ENCODE measurements at regions of chr20 and their contacts with region 1.

Region 1: GRCh38 chr20:35619196-35620095 is 3.8 kb downstream of the SPAG4 start:
- DNase-seq: peak; percentile 89 to 96
- ATAC-seq: peak; percentile 66 to 79
- H3K4me3 ChIP-seq: peak overlapping the region; percentile 61
- H3K27ac ChIP-seq: peak overlapping the region; percentile 80 to 90
- H3K4me1 ChIP-seq: peaks cover 18% of the 10 kb centered on the region
- CTCF ChIP-seq: peak; percentile 75
- EP300 ChIP-seq: no peak
- POLR2A ChIP-seq: peak; percentile 37; the same call in 1 of the 2 replicates
- RAD21 ChIP-seq: peak in 1 of 2 experiments; percentile 35; a peak in 3 of 5 replicates

Region 2: GRCh38 chr20:35363190-35363589 is 256.3 kb before region 1 on chr20:
- CTCF ChIA-PET with region 1: no interaction called
- POLR2A ChIA-PET with region 1: no interaction called
- DNase-seq: no peak
- ATAC-seq: no peak
- H3K4me3 ChIP-seq: no peak overlapping the region
- H3K27ac ChIP-seq: no peak overlapping the region
- H3K4me1 ChIP-seq: peaks cover 4% of the 10 kb centered on the region
- CTCF ChIP-seq: no peak
- EP300 ChIP-seq: no peak
- POLR2A ChIP-seq: no peak
- RAD21 ChIP-seq: no peak

Region 3: GRCh38 chr20:35463455-35464300 is 155.8 kb before region 1 on chr20:
- CTCF ChIA-PET with region 1: interaction called, 21 read pairs
- POLR2A ChIA-PET with region 1: no interaction called
- DNase-seq: peak; percentile 74
- ATAC-seq: peak; percentile 90 to 93
- H3K4me3 ChIP-seq: no peak overlapping the region
- H3K27ac ChIP-seq: 0 out of 6 replicates have a peak overlapping the region, but pooled peaks of 1 of the 2 experiments have one; percentile 6
- H3K4me1 ChIP-seq: peaks cover 21% of the 10 kb centered on the region
- CTCF ChIP-seq: peak; percentile 83
- EP300 ChIP-seq: no peak
- POLR2A ChIP-seq: no peak
- RAD21 ChIP-seq: peak; percentile 77 to 80

Region 4: DNA sequence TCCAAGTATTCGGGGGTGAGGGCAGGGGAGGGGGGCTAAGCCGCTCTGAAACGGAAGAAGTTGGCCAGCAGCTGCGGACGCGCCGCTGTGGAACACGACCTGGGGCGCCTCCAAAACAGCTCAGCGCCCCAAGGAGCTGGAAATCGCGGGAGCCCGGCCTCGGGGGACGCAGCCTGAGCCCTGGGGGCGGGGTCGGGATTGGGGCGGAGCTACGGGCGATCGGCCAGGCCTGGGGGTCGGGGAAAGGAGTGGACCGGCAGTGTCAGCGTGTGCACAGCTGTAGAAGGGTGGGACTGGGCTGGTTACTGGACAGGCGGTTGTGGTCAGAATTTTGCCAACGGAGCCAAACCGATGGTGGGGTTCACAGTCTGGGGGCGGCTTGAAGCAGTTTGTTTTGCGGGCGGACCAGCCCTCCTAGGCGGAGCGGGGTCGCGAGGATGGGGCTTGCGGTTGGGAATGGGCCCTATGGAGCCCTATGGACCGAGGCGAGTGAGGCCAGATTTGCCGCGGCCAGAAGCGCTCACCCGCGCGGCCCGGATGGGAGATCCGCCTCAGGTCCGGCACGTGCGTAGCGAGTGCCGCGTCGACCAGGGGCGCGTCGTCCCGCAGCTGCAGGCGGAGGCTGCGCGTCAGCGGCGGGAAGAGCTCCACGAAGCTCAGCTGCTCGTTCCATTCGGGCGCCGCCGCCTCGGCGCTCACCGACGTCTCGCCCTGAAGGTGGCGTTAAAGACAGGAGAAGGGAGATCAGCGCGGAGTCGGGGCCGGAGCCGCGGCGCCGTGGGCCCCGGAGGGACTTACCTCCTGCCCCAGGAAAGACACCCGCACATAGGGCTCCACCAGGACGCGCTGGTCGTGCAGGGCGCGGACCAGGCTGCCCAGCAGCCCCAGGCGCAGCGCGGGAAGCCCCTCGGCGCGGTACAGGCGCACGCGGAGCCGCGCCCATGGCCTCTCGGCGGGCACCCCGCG is 18.2 kb before region 1 on chr20:
- CTCF ChIA-PET with region 1: interaction called, 44 read pairs
- POLR2A ChIA-PET with region 1: interaction called, 8 read pairs
- DNase-seq: peak; percentile 76 to 79
- ATAC-seq: peak; percentile 86 to 89
- H3K4me3 ChIP-seq: peak overlapping the region; percentile 44
- H3K27ac ChIP-seq: peak overlapping the region; percentile 65 to 85; a peak in 5 of 6 replicates
- H3K4me1 ChIP-seq: peaks cover 10% of the 10 kb centered on the region; the same call in 2 of the 3 replicates
- CTCF ChIP-seq: peak; percentile 55
- EP300 ChIP-seq: no peak
- POLR2A ChIP-seq: no peak
- RAD21 ChIP-seq: peak; percentile 53 to 64; a peak in 4 of 5 replicates

Region 5: GRCh38 chr20:35641743-35642142 is 22.3 kb after region 1 on chr20:
- CTCF ChIA-PET with region 1: interaction called, 11 read pairs
- POLR2A ChIA-PET with region 1: no interaction called
- DNase-seq: no peak
- ATAC-seq: no peak
- H3K4me3 ChIP-seq: no peak overlapping the region
- H3K27ac ChIP-seq: no peak overlapping the region
- H3K4me1 ChIP-seq: no peaks in the 10 kb centered on the region
- CTCF ChIP-seq: no peak
- EP300 ChIP-seq: no peak
- POLR2A ChIP-seq: no peak
- RAD21 ChIP-seq: no peak

Region 6: DNA sequence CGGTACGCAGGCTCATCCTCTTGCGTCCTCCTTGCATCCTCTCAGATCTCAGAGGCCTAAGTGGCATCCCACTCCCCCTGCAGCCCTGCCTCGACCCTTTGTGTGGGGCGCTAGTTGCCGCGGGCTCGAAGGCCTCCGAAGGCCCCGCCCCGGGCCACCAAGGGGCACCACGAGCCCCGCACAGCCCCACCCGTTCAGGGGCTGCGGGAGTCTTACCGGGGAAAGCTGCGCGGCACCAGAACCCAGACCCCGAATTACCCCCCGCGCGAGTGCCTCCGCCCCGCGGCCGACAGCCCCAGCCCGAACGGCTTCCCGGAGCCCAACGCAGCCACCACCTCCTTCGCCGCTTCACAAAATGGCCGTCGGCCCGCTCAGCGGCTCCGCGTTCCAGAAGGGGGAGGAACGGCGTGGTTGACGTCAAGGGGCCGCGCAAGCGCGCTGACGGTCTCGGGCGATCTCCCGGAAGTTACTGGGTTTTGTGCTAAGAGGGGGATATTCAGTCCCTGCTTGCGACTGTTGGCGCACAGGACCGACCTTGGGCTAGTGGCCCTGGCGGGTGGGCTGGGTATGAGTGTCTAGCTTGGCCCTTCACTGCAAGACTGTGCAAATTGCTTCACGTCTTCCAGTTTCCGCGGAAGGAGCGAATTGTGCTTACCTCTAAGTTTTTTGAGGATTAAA is 45.2 kb after region 1 on chr20 and contains the starts of genes CPNE1 and RBM12:
- CTCF ChIA-PET with region 1: interaction called, 8 read pairs
- POLR2A ChIA-PET with region 1: interaction called, 51 read pairs
- DNase-seq: peak; percentile 95 to 98
- ATAC-seq: peak; percentile 93 to 95
- H3K4me3 ChIP-seq: peak within 1 kb of the TSS; percentile 91
- H3K27ac ChIP-seq: peak within 1 kb of the TSS; percentile 94 to 99
- H3K4me1 ChIP-seq: peaks cover 31% of the 10 kb centered on the region
- CTCF ChIP-seq: no peak
- EP300 ChIP-seq: no peak
- POLR2A ChIP-seq: peak; percentile 92
- RAD21 ChIP-seq: no peak
- polyA plus RNA-seq, gene CPNE1: 180 and 199 TPM in 2 replicates
- polyA plus RNA-seq, gene RBM12: 92.9 and 119 TPM in 2 replicates

Measured in A549 (cell line).